Activated CD8-positive, alpha-beta T cell treated with anti-CD3 and anti-CD28 coated beads, Interleukin-2, amount 10 ng/mL, durations not matched to agents 7 days and 5 days (primary cell): ENCODE measurements at regions of chr1 and their contacts with region 1.

Region 1: GRCh38 chr1:9615316-9616063 is 26.8 kb downstream of the TMEM201 start:
- DNase-seq: peak; percentile 74
- ATAC-seq: peak; percentile 87
- H3K4me3 Mint-ChIP-seq: no peak overlapping the region
- H3K27ac Mint-ChIP-seq: no peak overlapping the region
- H3K4me1 Mint-ChIP-seq: no peaks in the 10 kb centered on the region
- H3K27me3 Mint-ChIP-seq: peaks cover 4% of the 10 kb centered on the region

Region 2: DNA sequence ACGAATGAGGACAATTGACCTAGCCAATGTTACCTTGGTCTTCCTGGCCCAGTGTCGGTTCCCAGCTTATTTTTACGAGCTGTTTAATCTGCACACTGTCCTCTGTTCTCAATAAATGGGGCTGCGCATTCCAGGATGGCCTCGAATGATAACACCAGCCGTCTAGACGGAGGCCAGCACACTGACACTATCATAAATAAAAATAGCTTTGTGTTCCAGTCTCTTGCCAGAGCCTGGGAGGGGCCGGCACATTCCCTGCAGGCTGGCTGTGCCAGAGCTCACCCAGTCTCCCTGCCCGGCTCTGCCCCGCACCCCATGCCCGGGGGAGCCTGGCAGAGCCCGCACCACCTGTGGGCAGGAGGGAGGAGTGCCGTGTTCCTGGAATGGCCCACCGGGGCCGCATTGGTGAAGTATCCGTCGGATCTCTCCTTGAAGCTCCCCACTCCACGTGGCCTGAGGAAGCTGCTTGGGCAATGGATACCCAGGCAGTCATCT is 230.7 kb before region 1 on chr1:
- CTCF ChIA-PET with region 1: no interaction called
- POLR2A ChIA-PET with region 1: no interaction called
- DNase-seq: no peak
- ATAC-seq: no peak
- H3K4me3 Mint-ChIP-seq: no peak overlapping the region
- H3K27ac Mint-ChIP-seq: no peak overlapping the region
- H3K4me1 Mint-ChIP-seq: peaks cover 3% of the 10 kb centered on the region
- H3K27me3 Mint-ChIP-seq: peaks cover 12% of the 10 kb centered on the region

Region 3: DNA sequence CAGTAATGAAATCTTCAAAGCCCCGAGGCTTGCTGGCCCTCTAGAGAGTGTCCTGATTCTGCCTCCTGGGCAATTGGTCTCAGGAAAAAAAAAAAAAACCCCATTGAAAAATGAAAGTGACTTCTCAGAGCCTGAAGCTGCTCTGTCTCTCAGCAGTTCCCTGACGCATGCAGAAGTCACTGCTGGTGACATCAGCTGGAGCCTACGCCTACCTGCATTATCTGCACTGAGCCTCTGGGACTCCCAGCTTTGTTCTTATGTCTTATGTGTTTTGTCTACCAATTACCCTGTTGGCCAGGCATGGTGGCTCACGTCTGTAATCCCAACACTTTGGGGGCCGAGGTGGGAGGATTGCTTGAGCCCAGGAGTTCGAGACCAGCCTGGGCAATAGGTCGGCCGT is 86.3 kb before region 1 on chr1:
- CTCF ChIA-PET with region 1: no interaction called
- POLR2A ChIA-PET with region 1: no interaction called
- DNase-seq: no peak
- ATAC-seq: no peak
- H3K4me3 Mint-ChIP-seq: no peak overlapping the region
- H3K27ac Mint-ChIP-seq: no peak overlapping the region
- H3K4me1 Mint-ChIP-seq: no peaks in the 10 kb centered on the region
- H3K27me3 Mint-ChIP-seq: no peaks in the 10 kb centered on the region

Region 4: DNA sequence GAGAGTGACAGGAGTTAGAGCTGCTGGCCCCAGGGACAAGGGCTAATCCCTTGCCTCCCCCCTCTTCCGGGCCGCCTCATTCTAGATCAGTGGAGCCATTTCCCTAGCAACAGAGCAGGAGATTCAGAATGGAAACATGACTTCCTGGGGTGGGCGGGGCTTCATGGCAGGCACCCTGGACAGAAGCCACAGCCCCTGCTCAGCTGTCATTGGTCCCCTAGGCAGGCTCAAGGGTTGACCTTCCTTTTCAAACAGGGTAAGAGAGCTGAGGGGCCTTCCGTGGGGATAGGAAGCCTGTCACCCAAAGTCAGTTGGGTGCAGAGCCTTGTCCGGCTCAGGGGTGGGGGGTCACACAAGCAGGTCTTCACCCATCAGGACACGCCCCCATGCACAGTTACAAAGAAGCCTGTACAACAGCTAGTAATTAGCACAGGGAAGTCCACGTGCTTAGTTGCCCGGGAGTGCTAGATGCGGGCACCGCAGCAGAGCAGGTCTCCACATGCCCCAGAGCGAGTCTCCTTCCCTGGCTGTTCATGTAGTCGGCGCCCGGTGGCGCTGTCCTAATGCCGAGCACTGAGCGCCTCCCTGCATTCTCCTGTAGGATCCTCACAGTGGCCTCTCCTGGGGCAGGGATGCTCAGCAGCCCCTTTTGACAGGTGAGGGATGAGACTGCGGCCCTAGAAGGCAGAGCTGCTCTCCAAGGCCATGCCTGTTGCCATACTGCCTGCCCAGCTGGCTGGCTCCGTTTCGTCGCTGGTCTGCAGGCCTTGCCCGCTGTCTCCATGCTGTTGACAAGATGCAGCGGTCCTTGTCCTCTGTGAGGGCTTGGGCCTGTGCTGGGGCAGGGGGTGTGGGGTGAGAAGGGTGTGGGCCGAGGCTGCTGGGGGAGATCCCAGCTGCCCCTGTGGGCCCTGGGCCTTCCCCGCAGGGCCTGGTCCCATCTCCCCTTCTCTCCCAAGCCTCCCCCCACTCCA is 21.7 kb before region 1 on chr1:
- CTCF ChIA-PET with region 1: interaction called, 13 read pairs
- POLR2A ChIA-PET with region 1: no interaction called
- DNase-seq: peak; percentile 74
- ATAC-seq: peak; percentile 25
- H3K4me3 Mint-ChIP-seq: no peak overlapping the region
- H3K27ac Mint-ChIP-seq: peak overlapping the region; percentile 64
- H3K4me1 Mint-ChIP-seq: peaks cover 31% of the 10 kb centered on the region
- H3K27me3 Mint-ChIP-seq: no peaks in the 10 kb centered on the region

Region 5: DNA sequence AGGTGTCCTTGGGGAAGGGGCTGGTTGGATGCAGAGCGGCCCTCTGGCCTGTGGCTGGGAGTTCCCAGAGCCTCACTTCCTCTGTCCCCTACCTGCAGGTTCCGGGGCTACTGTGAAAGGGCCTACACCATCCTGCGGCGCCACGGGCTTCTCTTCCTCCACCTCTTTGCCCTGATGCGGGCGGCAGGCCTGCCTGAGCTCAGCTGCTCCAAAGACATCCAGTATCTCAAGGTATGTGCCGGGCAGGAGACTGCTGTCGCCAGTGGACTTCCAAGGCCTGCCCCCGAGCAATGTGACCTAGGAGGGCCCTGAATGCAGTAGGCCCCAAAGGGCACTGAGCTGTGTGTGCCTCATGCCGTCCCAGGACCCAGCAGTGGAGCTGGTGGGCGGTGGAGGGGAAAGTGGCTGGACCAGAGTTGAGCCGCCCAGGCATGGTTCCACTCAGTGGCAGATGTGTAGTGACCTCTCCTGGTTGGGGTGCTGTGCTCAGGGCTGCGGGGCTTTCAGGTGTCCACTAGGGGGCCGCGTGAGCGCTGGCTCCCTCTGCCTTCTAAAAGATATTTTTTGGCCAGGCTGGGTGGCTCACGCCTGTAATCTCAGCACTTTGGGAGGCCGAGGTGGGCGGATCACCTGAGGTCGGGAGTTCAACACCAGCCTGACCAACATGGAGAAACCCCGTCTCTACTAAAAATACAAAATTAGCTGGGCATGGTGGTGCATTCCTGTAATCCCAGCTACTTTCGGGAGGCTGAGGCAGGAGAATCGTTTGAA is 109.4 kb after region 1 on chr1:
- CTCF ChIA-PET with region 1: interaction called, 13 read pairs
- POLR2A ChIA-PET with region 1: no interaction called
- DNase-seq: peak; percentile 82
- ATAC-seq: peak; percentile 65
- H3K4me3 Mint-ChIP-seq: no peak overlapping the region
- H3K27ac Mint-ChIP-seq: peak overlapping the region; percentile 83
- H3K4me1 Mint-ChIP-seq: peaks cover 81% of the 10 kb centered on the region
- H3K27me3 Mint-ChIP-seq: no peaks in the 10 kb centered on the region

Region 6: DNA sequence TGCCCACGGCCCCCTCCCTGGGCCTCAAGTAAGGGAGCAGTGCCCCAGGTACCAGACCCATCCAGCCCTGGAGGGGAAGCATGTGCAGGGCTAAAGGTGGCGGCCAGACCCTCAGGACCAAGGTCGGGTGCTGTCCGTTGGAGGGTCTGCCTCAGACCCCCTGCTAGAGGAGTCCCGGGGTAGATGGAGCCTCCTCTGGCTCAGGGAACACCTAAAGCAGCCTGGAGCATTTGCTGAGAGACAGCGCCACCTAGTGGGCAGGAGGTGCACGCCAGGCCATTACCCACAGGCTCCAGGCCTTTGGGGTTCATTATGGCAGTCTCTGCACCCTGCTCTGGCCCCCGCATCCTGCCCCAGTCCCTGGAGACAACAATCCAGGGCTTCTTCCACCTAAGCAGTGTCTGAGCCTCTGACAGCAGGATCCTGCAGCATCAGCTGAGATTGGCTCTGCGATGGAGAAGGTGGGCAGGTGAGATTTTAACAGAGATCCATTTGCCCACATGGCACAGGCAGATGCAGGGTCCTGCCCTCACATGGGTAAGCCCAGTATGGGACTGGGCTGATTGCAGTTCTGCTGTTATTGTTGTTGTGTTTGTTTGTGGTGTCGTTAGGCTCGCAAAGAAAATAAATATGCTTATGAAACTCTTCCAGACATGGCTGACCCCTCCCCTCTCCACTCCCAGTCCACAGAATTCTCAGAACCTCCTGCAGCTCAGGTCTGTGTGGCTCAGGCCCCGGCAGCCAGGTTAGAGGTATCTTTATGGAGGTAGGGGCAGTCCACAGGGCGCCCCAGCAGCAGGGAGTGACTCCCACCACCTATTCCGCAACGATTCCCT is 252.1 kb after region 1 on chr1:
- CTCF ChIA-PET with region 1: interaction called, 19 read pairs
- POLR2A ChIA-PET with region 1: no interaction called
- DNase-seq: peak; percentile 92
- ATAC-seq: peak; percentile 97
- H3K4me3 Mint-ChIP-seq: no peak overlapping the region
- H3K27ac Mint-ChIP-seq: no peak overlapping the region
- H3K4me1 Mint-ChIP-seq: peaks cover 14% of the 10 kb centered on the region
- H3K27me3 Mint-ChIP-seq: no peaks in the 10 kb centered on the region